ENCODE measurements at regions of chr2 and their contacts with region 1.

Region 1: DNA sequence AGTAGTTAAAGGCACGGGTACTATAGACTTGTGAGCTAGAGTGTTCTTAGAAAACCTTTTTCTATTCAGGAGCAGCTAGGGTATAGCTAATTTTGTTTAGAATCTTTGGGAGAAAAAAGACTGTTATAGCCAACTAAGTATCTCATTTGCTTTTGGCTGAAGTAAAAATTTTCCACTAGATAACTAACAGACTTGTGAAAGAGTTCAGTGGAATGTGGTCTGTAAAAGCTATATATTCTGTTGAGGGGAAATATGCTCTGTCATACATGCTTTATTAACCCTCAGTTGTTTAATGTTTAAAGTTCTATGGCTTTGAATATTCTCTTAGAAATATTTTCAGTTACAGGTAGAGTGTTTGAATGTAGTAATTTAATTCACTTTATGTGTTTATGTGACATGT is 49.7 kb downstream of the RIF1 start:
- DNase-seq: no peak
- ATAC-seq: no peak
- H3K4me3 ChIP-seq: no peak overlapping the region
- H3K27ac ChIP-seq: no peak overlapping the region
- H3K4me1 ChIP-seq: no peaks in the 10 kb centered on the region
- H3K27me3 ChIP-seq: no peaks in the 10 kb centered on the region
- CTCF ChIP-seq: no peak

Region 2: DNA sequence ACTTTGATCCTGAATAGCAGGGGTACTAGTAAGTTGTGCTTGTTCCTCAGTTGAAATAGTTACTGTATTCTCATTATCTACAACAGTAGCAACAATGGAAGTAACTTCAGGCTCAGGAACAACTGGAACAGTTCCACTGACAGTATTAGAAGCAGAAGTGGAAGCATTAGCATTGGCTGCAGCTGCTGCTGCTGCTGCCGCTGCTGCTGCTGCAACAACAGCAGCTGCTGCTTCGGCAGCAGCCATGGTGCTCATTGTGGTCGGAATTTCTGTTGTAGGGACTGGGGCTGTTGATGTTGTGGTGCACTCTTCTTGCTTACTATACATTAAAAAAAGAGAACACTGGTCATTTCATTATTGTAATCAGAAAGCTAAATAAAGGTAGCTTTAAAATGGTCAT is 1217.1 kb after region 1 on chr2:
- intact Hi-C with region 1: loop called in 1 of 10 experiments (anchors 10 kb)
- DNase-seq: no peak
- ATAC-seq: no peak
- H3K4me3 ChIP-seq: no peak overlapping the region
- H3K27ac ChIP-seq: no peak overlapping the region
- H3K4me1 ChIP-seq: no peaks in the 10 kb centered on the region
- H3K27me3 ChIP-seq: no peaks in the 10 kb centered on the region
- CTCF ChIP-seq: no peak

Measured in heart right ventricle (tissue), 16 donors.